Naive thymus-derived CD4-positive, alpha-beta T cell (primary cell): ENCODE measurements at regions of chr14 and their contacts with region 1.

Region 1: DNA sequence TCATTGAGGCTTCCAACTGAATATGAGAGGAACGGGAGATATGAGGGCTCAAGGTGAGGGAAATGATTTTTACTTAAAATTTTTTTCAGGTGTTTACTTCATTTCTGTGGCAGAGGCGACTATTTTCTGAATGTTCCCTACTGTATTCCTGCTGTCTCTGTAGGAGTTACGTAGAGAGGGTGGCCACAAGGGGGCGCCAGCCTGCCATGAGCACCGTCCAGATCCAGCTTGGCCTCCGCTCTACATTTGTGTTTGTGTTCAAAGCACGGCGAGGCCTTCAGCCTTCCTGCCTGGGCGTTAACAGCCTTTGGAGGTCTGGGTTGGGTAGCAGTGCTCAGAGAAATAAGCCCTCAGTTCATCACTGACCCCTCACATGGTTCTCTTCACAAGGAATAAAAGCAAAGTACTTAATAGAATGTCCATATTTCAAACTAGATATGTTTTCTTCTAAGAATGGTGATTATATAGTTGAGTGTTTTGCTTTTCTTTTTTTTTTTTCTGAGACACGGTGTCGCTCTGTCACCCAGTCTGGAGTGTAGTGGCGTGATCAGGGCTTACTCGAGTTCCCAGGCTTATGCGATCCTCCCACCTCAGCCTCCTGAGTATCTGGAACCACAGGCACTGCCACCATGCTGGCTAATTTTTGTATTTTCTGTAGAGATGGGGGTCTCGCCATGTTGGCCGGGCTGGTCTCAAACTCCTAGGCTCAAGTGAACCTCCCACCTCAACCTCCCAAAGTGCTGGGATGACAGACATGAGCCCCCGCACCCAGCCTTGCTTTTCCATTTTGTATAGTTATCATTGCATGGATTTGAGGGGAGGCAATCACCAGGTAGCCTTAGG is 22.3 kb downstream of the CKB start:
- DNase-seq: peak; percentile 57 to 77 (median 72)
- ATAC-seq: peak; percentile 96
- H3K4me3 ChIP-seq: no peak overlapping the region
- H3K4me3 Mint-ChIP-seq: no peak overlapping the region
- H3K27ac ChIP-seq: no peak overlapping the region
- H3K27ac Mint-ChIP-seq: peak overlapping the region in 8 of 9 donors; percentile 6 to 89 (median 51)
- H3K4me1 ChIP-seq: no peaks in the 10 kb centered on the region
- H3K4me1 Mint-ChIP-seq: peaks cover 6 to 12% (median 9%) of the 10 kb centered on the region in 7 donors
- H3K27me3 ChIP-seq: no peaks in the 10 kb centered on the region
- H3K27me3 Mint-ChIP-seq: no peaks in the 10 kb centered on the region

Region 2: GRCh38 chr14:103520657-103521437 is 20.5 kb after region 1 on chr14:
- CTCF ChIA-PET with region 1: interaction called, 3 read pairs
- POLR2A ChIA-PET with region 1: no interaction called
- intact Hi-C with region 1: loop called in 1 of 2 experiments (anchors 2 kb)
- DNase-seq: peak; percentile 48 to 72 (median 60)
- ATAC-seq: peak; percentile 85
- H3K4me3 ChIP-seq: peak overlapping the region; percentile 37
- H3K4me3 Mint-ChIP-seq: peak overlapping the region; percentile 18 to 77 (median 64)
- H3K27ac ChIP-seq: no peak overlapping the region
- H3K27ac Mint-ChIP-seq: no peak overlapping the region
- H3K4me1 ChIP-seq: peaks cover 7 to 15% of the 10 kb centered on the region in 2 donors
- H3K4me1 Mint-ChIP-seq: peaks cover 0 to 21% (median 13%) of the 10 kb centered on the region in 7 donors
- H3K27me3 ChIP-seq: no peaks in the 10 kb centered on the region
- H3K27me3 Mint-ChIP-seq: peaks cover 0 to 33% (median 6%) of the 10 kb centered on the region in 5 donors